Left ventricle myocardium superior (tissue), 1 donor: ENCODE measurements at regions of chr15 and their contacts with region 1.

Region 1: DNA sequence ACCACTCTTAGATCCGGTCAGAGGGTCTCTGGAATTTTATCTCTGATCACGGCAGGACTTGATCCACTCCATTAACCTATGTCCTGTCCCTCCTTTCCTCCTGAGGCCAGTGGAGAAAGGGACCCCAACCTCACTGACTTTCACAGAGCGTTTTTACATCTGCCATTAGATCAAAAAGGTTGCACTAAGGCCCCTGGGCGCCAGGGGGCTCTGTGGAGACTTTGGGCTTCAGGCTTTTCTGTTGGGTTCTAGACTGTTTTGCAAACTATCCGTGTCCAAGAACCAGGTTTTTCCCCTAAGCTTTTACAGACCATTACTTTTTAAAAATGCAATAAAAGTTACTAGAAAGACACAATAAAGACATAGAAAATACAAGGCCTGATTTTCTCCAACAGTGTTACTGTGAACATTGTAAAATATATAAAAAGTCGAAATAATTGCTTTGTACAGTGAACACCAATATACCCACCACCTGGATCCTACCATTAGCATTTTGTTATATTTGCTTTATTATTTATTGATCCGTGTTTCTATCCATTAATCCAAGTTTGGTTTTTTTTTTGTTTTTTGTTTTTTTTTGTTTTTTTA is 159.7 kb downstream of the POLR2M start:
- DNase-seq: peak; percentile 76
- ATAC-seq: peak; percentile 63

Region 2: DNA sequence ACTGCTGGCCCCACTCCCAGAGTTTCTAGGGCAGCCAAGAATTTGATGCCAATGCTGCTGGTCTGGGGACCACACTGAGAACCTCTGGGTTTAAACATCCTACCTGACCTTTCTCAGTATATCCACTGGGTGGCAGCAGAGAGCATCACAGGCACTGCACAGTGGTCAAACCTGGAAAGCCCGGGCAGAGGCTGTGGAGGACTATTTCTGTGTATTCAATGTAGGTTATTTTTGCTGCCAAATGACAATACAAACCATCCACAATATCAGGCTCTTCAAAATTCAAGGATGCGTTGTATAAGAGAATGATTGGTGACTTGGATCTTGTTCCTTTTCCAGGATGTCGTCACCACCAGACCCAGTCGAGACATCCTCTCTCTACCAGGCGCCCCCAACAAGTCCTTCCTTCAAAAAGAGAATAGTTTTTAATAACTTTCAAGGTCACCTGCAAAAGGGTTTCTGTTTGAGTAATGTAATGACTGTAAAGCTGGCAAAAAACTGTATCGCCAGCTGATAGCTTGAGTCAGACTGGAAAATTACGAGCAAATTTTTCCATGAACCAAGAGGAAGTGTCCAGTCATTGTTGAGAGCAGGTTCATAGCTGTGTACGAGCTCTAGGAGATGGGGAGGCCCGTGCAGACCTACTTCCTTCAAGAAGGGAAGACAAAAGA is 305.1 kb before region 1 on chr15:
- intact Hi-C with region 1: loop called (anchors 10 kb)
- DNase-seq: peak; percentile 67
- ATAC-seq: peak; percentile 90

Region 3: GRCh38 chr15:57961919-57962318 is 95.7 kb after region 1 on chr15:
- intact Hi-C with region 1: no loop called
- DNase-seq: no peak
- ATAC-seq: peak; percentile 23

Region 4: DNA sequence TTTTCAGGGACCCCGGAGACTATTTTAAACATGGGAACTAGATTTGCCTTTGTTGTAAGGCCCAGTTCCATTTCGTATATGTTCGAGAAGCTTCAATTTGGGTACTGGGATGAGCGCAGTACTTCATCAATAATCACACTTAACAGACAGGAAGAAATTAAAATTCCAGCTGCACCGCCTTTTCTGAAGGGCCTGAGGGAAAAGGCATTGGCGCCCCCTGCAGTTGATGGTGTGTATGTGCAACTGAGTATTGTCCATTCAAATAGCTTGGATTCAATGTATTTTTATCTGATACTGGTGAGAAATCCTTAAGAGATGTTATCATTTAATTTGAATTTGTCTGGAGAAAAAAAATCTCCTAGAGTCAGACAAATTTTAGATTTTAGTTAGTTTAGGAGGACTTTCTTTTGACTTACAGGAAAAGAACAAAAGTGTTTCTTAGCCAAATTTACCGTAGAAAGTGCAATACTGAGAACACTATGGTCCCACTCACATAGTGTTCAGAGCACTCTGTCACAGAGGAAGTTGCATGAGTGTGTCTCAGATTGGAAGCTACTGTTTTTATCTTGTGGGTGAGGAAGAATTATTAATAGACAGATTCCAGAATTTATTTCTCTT is 204.7 kb after region 1 on chr15:
- intact Hi-C with region 1: loop called (anchors 5 kb)
- DNase-seq: peak; percentile 65
- ATAC-seq: no peak

Region 5: DNA sequence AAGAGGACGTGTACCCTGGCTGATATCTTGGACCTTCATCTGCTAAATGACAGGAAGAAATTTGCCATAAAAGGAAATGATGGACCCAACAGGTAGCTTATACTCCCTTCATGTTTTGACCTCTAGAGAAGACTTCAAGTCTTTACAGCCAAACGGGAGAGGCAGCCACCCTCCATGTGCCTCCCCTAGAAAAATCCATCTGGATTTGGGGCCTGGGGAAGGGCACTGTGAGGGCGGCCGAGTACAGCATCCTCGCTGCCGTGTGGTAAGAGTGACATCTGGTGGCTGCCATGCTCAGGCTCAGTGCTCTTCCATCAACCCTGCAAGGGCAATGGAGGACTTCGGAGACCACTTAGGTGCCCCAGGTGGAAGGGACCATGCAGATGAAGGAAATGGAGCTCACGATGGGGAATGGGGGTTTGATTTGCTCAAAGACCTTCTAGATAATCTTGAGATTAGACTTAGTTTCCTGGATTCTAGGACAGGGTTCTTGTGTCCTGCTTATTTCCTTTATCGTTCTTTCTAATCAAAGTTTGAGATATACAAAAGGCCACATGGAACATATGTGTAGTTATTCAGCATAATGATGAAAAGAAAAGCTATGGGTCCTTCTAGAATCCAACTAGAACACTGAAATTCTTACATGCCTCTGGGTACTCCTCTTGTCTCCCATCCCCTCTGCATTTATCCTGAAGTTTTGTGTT is 316.4 kb after region 1 on chr15:
- intact Hi-C with region 1: loop called (anchors 10 kb)
- DNase-seq: peak; percentile 55
- ATAC-seq: peak; percentile 91